ENCODE measurements at regions of chr13 and their contacts with region 1.

Region 1: DNA sequence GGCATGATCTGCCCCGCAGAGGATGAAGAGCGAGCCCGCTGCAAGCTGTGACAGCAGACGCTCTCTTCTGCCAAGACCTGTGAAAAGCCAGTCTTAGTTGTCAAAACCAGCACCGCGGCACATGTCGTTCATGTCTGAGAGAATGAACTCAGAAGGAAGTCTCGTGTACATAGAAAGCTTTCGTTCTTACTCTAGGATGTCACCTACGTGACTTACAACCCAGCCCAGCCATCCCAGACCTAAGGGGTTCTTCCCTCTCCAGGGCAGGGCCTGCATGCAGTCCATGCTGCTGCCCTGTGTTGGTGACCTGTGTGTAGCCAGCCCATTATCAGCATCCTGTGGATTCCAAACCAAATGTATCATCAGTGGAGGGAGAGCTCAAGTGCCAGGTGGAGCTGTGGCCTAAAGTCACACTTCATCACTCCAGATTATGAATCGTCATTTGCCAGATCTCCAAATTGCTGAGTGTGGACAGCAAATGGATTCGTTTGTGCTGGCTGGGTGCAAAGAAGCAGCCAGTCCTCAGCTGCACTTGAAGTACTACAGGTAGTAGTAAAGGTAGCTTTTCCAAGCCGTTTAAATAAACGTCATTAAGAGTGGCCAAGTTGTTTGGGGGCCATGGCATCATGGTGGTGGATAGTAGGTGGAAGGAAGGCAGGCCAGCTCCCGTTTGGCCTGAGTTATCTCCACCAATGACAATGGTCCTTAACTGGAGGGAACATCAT is 73.9 kb upstream of the GPR183 start:
- DNase-seq: peak; percentile 77
- H3K4me3 Mint-ChIP-seq: no peak overlapping the region
- H3K27ac Mint-ChIP-seq: peak overlapping the region; percentile 84
- H3K4me1 Mint-ChIP-seq: peaks cover 86% of the 10 kb centered on the region
- H3K27me3 Mint-ChIP-seq: no peaks in the 10 kb centered on the region

Region 2: GRCh38 chr13:99296398-99296797 is 84.7 kb before region 1 on chr13:
- CTCF ChIA-PET with region 1: interaction called, 5 read pairs
- POLR2A ChIA-PET with region 1: interaction called, 11 read pairs
- DNase-seq: no peak
- H3K4me3 Mint-ChIP-seq: peak overlapping the region; percentile 71
- H3K27ac Mint-ChIP-seq: peak overlapping the region; percentile 94
- H3K4me1 Mint-ChIP-seq: peaks cover 78% of the 10 kb centered on the region
- H3K27me3 Mint-ChIP-seq: no peaks in the 10 kb centered on the region

Region 3: DNA sequence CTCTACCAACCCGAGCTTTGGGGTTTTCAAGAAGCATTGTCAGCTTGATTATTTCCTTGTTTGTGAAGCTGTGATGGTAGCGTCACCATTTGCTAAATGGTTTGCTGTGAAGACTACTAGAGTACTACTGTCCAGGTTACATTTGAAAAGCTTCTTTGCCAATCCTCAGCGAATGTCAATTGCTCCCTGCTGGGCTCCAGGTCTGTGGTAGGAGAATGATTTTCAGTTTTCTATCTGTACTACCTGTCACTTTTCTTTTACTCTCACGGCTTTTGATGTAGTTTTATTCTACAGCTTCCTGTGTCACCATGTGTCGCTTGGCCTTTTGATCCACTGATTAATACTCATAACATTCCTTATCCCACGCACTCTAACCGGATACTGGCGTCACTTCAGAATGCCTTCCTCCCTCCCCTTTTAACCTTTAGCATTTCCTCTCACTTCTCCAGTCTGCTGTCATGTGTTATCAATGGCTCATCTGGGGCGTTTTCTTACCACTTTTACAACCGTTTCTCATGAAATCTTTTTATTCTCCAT is 66.4 kb before region 1 on chr13:
- CTCF ChIA-PET with region 1: interaction called, 4 read pairs
- POLR2A ChIA-PET with region 1: interaction called, 80 read pairs
- DNase-seq: peak; percentile 64
- H3K4me3 Mint-ChIP-seq: peak overlapping the region; percentile 68
- H3K27ac Mint-ChIP-seq: peak overlapping the region; percentile 89
- H3K4me1 Mint-ChIP-seq: peaks cover 76% of the 10 kb centered on the region
- H3K27me3 Mint-ChIP-seq: no peaks in the 10 kb centered on the region

Region 4: DNA sequence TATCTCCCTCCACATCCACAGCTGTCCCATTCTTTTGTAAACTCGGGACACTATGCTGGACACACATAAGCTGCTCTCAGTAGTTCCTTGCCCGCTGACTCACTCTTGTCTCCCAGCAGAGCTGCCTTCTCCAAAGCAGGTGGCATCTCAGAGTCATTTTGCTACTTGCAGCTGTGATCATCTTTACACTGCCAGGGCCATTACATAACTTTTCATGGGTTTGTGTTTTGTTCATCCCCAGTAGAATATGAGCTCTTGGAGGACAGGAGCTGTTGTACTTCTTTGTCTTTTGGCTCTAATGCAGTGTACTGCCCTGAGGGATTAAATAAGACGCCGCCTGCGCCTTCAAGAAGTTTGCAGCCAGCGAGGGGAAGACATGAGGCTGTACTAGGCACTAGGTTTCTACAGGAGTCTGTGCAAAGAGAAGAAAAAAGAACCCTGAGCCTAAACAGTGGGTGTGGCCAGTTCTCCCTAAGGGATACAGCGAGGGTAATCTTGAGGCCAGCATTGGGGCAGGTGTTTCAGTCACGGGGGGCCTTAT is 33.1 kb before region 1 on chr13:
- CTCF ChIA-PET with region 1: interaction called, 12 read pairs
- POLR2A ChIA-PET with region 1: interaction called, 100 read pairs
- DNase-seq: no peak
- H3K4me3 Mint-ChIP-seq: no peak overlapping the region
- H3K27ac Mint-ChIP-seq: no peak overlapping the region
- H3K4me1 Mint-ChIP-seq: peaks cover 47% of the 10 kb centered on the region
- H3K27me3 Mint-ChIP-seq: no peaks in the 10 kb centered on the region

Region 5: DNA sequence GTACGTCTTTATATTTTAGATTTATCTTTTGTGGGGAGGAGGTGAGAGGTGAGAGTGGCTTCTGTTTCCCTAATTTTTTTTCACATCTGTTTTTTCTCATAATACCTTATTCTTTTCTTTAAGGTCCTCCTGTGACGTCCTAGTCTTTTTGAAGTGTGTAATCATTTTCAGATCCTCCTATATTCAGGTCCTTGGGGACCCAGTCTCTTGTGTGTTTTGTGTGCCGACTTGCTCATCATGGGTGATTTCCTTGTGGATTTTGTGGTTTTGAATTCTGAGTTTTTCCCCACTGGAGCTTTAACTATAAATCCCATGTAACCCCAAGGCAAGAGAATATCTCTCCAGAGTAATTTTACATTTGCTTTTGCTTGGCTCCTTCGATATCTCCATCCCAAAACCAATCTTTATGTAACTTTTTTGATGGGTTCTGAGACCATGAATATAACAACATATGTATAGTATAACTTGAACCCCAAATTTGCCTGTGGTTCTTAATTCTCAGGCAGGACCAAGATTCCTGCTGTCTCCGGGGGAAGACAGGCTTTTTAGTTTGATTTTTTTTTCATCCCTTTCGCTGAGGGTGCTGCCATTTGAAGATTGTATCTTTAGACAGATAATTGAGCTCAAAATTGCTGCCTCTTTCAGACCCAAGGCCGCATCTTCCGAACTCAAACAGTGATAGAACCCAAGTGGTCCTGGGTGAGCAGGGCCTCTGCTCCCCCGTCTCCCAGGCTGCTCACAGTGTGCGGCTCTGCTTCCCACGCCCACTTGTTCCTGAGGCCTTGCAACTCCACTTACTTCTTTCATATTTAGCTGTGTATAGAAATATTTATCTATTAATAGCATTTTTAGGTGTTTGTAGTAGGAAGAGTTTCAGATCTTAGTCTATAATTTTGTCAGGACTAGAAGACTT is 14.8 kb before region 1 on chr13:
- CTCF ChIA-PET with region 1: interaction called, 11 read pairs
- POLR2A ChIA-PET with region 1: interaction called, 23 read pairs
- DNase-seq: no peak
- H3K4me3 Mint-ChIP-seq: no peak overlapping the region
- H3K27ac Mint-ChIP-seq: no peak overlapping the region
- H3K4me1 Mint-ChIP-seq: peaks cover 82% of the 10 kb centered on the region
- H3K27me3 Mint-ChIP-seq: no peaks in the 10 kb centered on the region

Measured in activated CD4-positive, alpha-beta memory T cell treated with anti-CD3 and anti-CD28 coated beads, Interleukin-2, amount 10 ng/mL, durations not matched to agents 7 days and 5 days (primary cell).